Mammary epithelial cell (primary cell): ENCODE measurements at regions of chr10 and their contacts with region 1.

Region 1: DNA sequence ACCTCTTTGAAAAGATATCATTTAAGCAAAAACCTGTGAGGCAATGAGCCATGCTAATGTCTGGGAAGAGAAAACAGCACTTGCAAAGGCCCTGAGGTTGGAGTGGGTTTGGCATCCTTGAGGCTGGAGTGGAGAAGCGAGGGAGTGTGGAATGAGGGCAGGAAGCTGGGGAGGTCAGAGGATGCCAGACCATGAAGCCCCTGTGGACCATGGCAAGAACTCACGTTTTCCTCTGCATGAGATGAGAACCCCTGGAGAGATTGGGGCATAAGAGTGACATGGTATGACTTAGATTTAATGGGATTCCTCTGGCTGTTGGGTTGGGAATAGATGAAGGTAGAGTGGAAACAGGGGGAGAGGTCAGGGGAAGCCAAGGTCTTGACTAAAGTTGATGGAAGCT is 49.4 kb downstream of the GPR26 start:
- DNase-seq: no peak
- H3K4me3 ChIP-seq: no peak overlapping the region
- H3K27ac ChIP-seq: no peak overlapping the region
- H3K4me1 ChIP-seq: no peaks in the 10 kb centered on the region
- H3K27me3 ChIP-seq: no peaks in the 10 kb centered on the region
- CTCF ChIP-seq: no peak

Region 2: DNA sequence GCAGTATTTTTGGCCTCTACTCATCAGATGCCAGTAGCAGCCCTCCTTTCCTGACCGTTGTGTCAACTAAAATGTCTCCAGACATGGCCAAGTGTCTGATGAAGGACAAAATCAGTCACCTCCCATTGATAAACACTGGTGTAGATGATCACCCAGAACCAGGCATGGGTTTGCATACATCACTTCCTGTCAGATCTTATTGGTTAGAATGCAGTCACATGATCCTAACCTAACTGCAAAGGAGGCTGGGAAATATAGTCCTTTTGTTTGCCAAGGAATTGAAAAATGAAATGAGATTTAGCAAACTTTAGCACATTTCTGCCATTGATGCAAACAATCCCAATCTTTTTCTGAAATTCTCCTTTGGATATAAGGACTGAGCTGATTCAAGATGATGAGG is 419.9 kb before region 1 on chr10:
- CTCF ChIA-PET with region 1: no interaction called
- dilution Hi-C with region 1: no loop called
- in situ Hi-C with region 1: no loop called
- intact Hi-C with region 1: no loop called
- DNase-seq: no peak
- H3K4me3 ChIP-seq: no peak overlapping the region
- H3K27ac ChIP-seq: no peak overlapping the region
- H3K4me1 ChIP-seq: no peaks in the 10 kb centered on the region
- H3K27me3 ChIP-seq: no peaks in the 10 kb centered on the region
- CTCF ChIP-seq: no peak

Region 3: GRCh38 chr10:123766012-123766411 is 50.5 kb after region 1 on chr10:
- CTCF ChIA-PET with region 1: no interaction called
- dilution Hi-C with region 1: loop called (anchors 5 kb)
- in situ Hi-C with region 1: no loop called
- intact Hi-C with region 1: no loop called
- DNase-seq: no peak
- H3K4me3 ChIP-seq: no peak overlapping the region
- H3K27ac ChIP-seq: no peak overlapping the region
- H3K4me1 ChIP-seq: peaks cover 8% of the 10 kb centered on the region
- H3K27me3 ChIP-seq: no peaks in the 10 kb centered on the region
- CTCF ChIP-seq: no peak